K562 (cell line): ENCODE measurements at regions of chr2 and their contacts with region 1.

Region 1: DNA sequence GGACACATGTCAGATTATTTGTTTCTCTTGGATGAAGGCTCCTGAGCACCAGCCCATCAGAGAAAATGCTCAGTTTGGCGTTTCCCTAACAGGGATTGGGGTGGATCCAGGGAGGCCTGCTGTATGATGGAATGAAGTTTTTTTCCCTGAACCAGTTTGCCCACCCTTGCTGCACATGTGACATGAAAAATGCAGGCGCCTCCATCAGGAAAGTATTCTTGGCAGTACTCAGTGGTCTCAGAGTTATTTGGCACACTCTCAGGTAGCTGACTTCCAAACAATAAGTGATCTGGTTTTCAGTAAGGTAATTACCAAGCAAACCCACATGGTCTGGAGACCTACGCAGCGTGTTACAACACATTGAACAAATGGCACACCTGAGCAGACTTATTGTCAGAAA is 254.9 kb downstream of the PAX3 start:
- DNase-seq: no peak
- ATAC-seq: no peak
- H3K4me3 ChIP-seq: no peak overlapping the region
- H3K27ac ChIP-seq: no peak overlapping the region
- H3K4me1 ChIP-seq: no peaks in the 10 kb centered on the region
- H3K27me3 ChIP-seq: no peaks in the 10 kb centered on the region
- CTCF ChIP-seq: no peak
- EP300 ChIP-seq: no peak
- POLR2A ChIP-seq: no peak
- RAD21 ChIP-seq: no peak

Region 2: DNA sequence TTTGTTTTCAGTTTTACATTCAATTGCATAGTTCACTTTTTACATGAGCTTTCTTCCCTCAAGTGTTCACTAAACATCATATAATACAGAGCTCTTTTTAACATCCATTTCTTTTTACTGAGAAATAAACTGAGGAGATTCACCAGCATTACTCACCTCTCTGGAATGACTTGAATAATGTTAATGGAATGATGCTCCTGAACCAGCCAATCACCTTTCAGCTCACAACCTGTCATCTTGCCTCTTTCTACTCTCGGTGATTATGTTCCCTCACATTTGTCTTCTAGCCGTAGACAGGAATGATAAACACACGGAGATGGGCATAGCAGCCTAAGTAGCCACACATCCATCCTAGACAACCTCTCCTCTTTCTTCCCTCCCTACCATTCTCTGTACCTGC is 46.8 kb before region 1 on chr2:
- CTCF ChIA-PET with region 1: no interaction called
- POLR2A ChIA-PET with region 1: no interaction called
- in situ Hi-C with region 1: no loop called
- intact Hi-C with region 1: no loop called
- DNase-seq: no peak
- ATAC-seq: no peak
- H3K4me3 ChIP-seq: no peak overlapping the region
- H3K27ac ChIP-seq: no peak overlapping the region
- H3K4me1 ChIP-seq: no peaks in the 10 kb centered on the region
- H3K27me3 ChIP-seq: no peaks in the 10 kb centered on the region
- CTCF ChIP-seq: no peak
- EP300 ChIP-seq: no peak
- POLR2A ChIP-seq: no peak
- RAD21 ChIP-seq: no peak

Region 3: GRCh38 chr2:222548992-222549391 is 505.1 kb after region 1 on chr2:
- CTCF ChIA-PET with region 1: no interaction called
- POLR2A ChIA-PET with region 1: no interaction called
- in situ Hi-C with region 1: no loop called
- intact Hi-C with region 1: loop called (anchors 5 kb)
- DNase-seq: no peak
- ATAC-seq: no peak
- H3K4me3 ChIP-seq: no peak overlapping the region
- H3K27ac ChIP-seq: no peak overlapping the region
- H3K4me1 ChIP-seq: no peaks in the 10 kb centered on the region
- H3K27me3 ChIP-seq: no peaks in the 10 kb centered on the region
- CTCF ChIP-seq: no peak
- EP300 ChIP-seq: no peak
- POLR2A ChIP-seq: no peak
- RAD21 ChIP-seq: no peak